ENCODE measurements at regions of chr9 and their contacts with region 1.

Region 1: GRCh38 chr9:125672876-125673275 is 34.1 kb downstream of the MAPKAP1 start:
- DNase-seq: no peak
- ATAC-seq: no peak
- H3K4me3 ChIP-seq: no peak overlapping the region
- H3K27ac ChIP-seq: no peak overlapping the region
- H3K4me1 ChIP-seq: peaks cover 16% of the 10 kb centered on the region
- H3K27me3 ChIP-seq: no peaks in the 10 kb centered on the region
- CTCF ChIP-seq: no peak

Region 2: GRCh38 chr9:125272697-125273096 is 400.2 kb before region 1 on chr9:
- CTCF ChIA-PET with region 1: no interaction called
- POLR2A ChIA-PET with region 1: interaction called, 14 read pairs
- in situ Hi-C with region 1: no loop called
- intact Hi-C with region 1: no loop called
- DNase-seq: no peak
- ATAC-seq: no peak
- H3K4me3 ChIP-seq: no peak overlapping the region
- H3K27ac ChIP-seq: peak overlapping the region; percentile 23; the same call in 1 of the 2 replicates
- H3K4me1 ChIP-seq: peaks cover 10% of the 10 kb centered on the region; the same call in 1 of the 2 replicates
- H3K27me3 ChIP-seq: no peaks in the 10 kb centered on the region
- CTCF ChIP-seq: no peak

Region 3: DNA sequence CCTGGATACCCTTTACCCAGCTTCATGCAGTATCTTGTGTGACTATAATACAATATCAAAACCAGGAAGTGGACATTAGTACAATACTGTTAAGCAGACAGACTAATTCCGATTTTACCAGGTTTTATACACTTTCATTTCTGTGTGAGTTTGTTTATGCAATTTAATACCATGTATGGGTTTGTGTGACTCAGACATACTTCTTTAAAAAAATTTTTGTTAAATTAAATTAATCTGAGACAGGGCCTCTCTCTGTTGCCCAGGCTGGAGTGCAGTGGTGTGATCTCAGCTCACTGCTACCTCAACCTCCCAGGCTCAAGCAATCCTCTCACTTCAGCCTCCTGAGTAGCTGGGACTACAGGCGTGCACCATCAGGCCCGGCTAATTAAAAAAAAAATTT is 254.5 kb before region 1 on chr9:
- CTCF ChIA-PET with region 1: no interaction called
- POLR2A ChIA-PET with region 1: no interaction called
- in situ Hi-C with region 1: no loop called
- intact Hi-C with region 1: no loop called
- DNase-seq: no peak
- ATAC-seq: no peak
- H3K4me3 ChIP-seq: no peak overlapping the region
- H3K27ac ChIP-seq: no peak overlapping the region
- H3K4me1 ChIP-seq: no peaks in the 10 kb centered on the region
- H3K27me3 ChIP-seq: no peaks in the 10 kb centered on the region
- CTCF ChIP-seq: no peak

Region 4: DNA sequence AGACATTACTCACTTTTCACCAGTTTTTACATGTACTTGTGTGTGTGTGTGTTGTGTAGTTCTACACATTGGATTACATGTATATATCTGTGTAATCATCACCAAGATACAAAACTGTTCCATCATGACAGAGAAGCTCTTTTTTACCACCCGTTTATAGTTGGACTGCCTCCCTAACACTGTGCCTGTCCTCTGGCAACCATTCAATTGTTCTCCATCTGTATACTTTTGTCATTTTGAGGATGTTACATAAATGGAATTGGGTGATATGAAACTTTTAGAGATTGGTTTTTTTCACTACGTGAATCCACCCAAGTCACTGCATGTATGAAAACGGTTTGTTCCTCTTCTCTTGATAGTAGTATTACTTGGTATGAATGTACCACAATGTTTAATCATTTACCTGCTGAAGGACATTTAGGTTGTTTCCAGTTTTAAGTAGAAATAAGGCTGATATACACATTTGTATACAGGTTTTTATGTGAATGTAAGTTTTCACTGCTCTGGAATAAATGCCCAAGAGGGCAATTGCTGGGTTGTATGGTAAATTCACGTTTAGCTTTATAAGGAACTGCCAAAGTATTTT is 92.1 kb before region 1 on chr9:
- CTCF ChIA-PET with region 1: no interaction called
- POLR2A ChIA-PET with region 1: no interaction called
- in situ Hi-C with region 1: no loop called
- intact Hi-C with region 1: no loop called
- DNase-seq: no peak
- ATAC-seq: no peak
- H3K4me3 ChIP-seq: no peak overlapping the region
- H3K27ac ChIP-seq: no peak overlapping the region
- H3K4me1 ChIP-seq: no peaks in the 10 kb centered on the region
- H3K27me3 ChIP-seq: no peaks in the 10 kb centered on the region
- CTCF ChIP-seq: no peak